Activated CD4-positive, alpha-beta memory T cell treated with anti-CD3 and anti-CD28 coated beads, Interleukin-2, amount 10 ng/mL, durations not matched to agents 7 days and 5 days (primary cell): ENCODE measurements at regions of chr6 and their contacts with region 1.

Region 1: GRCh38 chr6:158026054-158026900 is 44.6 kb downstream of the SYNJ2 start:
- DNase-seq: peak; percentile 85
- H3K4me3 Mint-ChIP-seq: peak overlapping the region; percentile 70
- H3K27ac Mint-ChIP-seq: peak overlapping the region; percentile 98
- H3K4me1 Mint-ChIP-seq: peaks cover 48% of the 10 kb centered on the region
- H3K27me3 Mint-ChIP-seq: no peaks in the 10 kb centered on the region

Region 2: DNA sequence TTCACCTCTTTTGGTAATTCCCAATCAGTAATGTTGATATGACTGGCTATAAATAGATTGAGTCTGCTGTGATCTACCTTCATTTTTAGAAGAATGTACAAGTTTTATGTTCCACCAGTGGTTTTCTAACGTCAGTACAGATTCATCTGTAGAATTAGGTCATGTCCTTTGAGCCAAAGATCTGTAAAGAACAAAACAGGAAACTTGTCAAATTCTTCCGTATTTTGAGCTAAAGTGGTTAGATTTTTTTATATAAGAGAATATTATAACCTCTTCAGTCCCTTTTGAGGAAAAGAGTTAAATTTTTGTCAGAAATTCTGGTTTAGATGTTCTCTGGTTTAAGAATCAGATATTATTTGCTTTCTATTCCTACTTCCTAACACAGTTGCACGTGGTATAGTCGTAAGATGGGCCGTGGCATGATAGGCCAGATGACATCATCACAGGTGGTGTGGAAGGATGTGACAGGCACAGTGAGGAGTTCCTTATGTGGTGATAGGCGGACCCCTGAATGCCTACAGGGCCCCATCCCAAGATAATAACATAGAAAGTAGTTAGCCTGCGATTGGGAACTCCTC is 141.0 kb before region 1 on chr6:
- CTCF ChIA-PET with region 1: interaction called, 11 read pairs
- POLR2A ChIA-PET with region 1: interaction called, 4 read pairs
- DNase-seq: peak; percentile 68
- H3K4me3 Mint-ChIP-seq: peak overlapping the region; percentile 2
- H3K27ac Mint-ChIP-seq: peak overlapping the region; percentile 77
- H3K4me1 Mint-ChIP-seq: peaks cover 56% of the 10 kb centered on the region
- H3K27me3 Mint-ChIP-seq: no peaks in the 10 kb centered on the region

Region 3: DNA sequence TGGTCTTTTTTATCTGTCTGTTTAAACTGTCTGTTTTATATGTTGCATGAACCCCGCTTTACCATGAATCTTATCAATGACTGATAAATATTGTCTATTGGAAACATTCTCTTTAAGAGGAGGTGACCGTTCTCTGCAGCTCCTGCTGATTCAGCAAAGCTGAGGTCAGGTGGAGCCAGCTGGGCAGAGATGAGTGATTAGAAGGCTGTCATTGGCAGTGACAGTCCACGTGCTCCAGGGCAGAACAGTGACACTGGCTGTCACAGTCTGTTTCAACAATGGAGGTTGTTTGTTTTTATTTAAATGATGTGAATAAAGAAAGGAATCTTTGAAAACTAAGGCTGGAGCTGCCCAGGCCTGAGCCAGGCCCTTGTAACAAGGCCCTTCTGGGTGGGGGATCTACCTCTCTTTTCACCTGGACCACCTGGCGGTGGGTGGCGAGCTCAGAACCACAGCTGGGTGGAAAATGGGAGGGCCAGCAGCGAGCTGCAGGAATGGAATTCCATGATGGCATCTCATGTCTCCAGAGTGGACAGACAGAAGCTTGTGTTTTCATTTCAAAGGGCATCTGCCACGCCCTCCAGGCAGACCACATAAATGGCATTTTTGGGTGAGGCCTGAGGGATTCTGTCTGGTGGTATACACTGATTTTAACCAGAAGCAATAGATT is 32.0 kb before region 1 on chr6:
- CTCF ChIA-PET with region 1: interaction called, 12 read pairs
- POLR2A ChIA-PET with region 1: interaction called, 8 read pairs
- DNase-seq: no peak
- H3K4me3 Mint-ChIP-seq: no peak overlapping the region
- H3K27ac Mint-ChIP-seq: no peak overlapping the region
- H3K4me1 Mint-ChIP-seq: peaks cover 27% of the 10 kb centered on the region
- H3K27me3 Mint-ChIP-seq: no peaks in the 10 kb centered on the region

Region 4: GRCh38 chr6:158014505-158015187 is 11.6 kb before region 1 on chr6:
- CTCF ChIA-PET with region 1: interaction called, 24 read pairs
- POLR2A ChIA-PET with region 1: interaction called, 5 read pairs
- DNase-seq: no peak
- H3K4me3 Mint-ChIP-seq: no peak overlapping the region
- H3K27ac Mint-ChIP-seq: peak overlapping the region; percentile 48
- H3K4me1 Mint-ChIP-seq: peaks cover 51% of the 10 kb centered on the region
- H3K27me3 Mint-ChIP-seq: no peaks in the 10 kb centered on the region

Region 5: DNA sequence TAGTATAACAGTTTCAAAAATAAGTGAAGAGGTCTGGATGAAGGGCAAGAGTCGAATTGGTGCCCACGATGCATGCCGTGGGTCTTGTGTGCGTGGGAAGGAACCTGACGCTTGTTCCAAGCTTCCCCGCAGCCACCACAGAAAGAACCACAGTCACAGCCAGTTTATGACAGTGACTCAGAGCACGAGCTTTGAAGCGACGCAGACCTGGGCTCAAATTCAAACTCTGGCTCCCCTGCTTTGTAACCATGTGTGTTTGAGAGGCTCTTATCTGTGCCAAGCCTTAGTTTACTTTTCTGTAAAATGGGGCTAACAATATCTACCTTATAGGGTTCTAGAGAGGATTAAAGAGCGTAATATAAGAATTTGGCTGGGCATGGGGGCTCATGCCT is 20.8 kb after region 1 on chr6:
- CTCF ChIA-PET with region 1: interaction called, 23 read pairs
- POLR2A ChIA-PET with region 1: interaction called, 7 read pairs
- DNase-seq: peak; percentile 63
- H3K4me3 Mint-ChIP-seq: no peak overlapping the region
- H3K27ac Mint-ChIP-seq: peak overlapping the region; percentile 49
- H3K4me1 Mint-ChIP-seq: peaks cover 23% of the 10 kb centered on the region
- H3K27me3 Mint-ChIP-seq: no peaks in the 10 kb centered on the region

Region 6: DNA sequence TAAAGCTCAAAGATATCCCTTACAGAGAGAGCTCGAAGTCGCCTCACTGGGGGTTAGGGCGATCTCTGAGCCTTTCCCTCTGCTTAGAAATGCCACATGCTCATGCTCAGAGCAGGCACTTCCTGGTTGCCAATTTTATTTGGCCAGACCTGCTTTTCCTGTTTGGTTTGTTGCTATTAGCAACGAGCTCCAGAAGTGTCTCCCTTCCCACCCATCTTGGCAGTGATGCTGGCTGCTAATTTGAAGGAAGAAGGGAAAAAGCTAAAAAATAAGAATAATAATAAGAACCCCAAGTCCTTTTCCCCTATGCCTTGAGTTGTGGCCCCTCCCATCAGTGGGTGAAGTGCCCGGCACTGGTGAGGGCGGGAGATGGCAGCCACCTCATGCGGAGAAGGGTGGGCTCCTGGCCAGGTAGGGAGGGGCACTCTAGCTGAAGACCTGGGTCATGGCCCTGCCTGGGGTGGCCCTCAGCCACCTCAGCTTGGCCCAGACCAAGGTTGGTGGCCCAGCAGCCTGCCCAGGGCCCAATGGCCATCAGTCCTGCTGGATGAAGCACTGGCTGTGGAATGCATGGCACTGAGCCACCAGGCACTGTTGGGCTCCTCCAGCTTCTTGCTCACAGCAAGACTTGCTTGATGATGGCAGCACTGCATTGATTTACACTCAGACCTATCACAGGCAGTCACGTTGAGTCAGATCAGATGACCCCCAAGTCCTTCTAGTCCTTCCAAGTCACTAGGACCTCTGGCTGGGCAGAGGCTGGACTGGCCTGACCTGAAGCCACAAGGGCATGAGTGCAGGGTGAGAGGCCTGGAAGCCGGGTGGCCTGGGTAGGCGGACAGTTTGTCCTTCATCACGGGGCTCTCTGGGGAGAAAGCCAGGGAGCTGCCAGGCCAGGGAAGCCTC is 34.4 kb after region 1 on chr6:
- CTCF ChIA-PET with region 1: interaction called, 23 read pairs
- POLR2A ChIA-PET with region 1: interaction called, 4 read pairs
- DNase-seq: no peak
- H3K4me3 Mint-ChIP-seq: no peak overlapping the region
- H3K27ac Mint-ChIP-seq: no peak overlapping the region
- H3K4me1 Mint-ChIP-seq: peaks cover 33% of the 10 kb centered on the region
- H3K27me3 Mint-ChIP-seq: no peaks in the 10 kb centered on the region

Region 7: DNA sequence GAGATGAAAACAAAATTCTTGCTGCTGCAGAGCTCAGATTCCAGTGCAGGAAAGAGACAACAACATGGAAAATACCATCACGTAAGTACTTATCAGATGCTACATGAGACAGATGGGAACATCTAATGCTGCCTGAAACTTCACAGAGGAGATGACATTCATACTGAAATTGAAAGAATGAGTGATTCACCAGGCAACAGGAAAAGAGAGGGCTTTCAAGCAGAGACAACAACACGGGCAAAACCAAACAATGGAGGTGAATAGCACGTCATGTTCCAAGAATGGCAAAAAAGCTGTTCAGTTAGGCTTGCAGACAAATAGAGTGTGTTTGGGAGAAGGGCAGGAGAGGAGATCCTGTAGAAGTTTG is 181.1 kb after region 1 on chr6:
- CTCF ChIA-PET with region 1: no interaction called
- POLR2A ChIA-PET with region 1: no interaction called
- DNase-seq: peak; percentile 55
- H3K4me3 Mint-ChIP-seq: peak overlapping the region; percentile 35
- H3K27ac Mint-ChIP-seq: peak overlapping the region; percentile 85
- H3K4me1 Mint-ChIP-seq: peaks cover 43% of the 10 kb centered on the region
- H3K27me3 Mint-ChIP-seq: no peaks in the 10 kb centered on the region